Tibial artery (tissue), 4 donors: ENCODE measurements at regions of chr6 and their contacts with region 1.

Region 1: DNA sequence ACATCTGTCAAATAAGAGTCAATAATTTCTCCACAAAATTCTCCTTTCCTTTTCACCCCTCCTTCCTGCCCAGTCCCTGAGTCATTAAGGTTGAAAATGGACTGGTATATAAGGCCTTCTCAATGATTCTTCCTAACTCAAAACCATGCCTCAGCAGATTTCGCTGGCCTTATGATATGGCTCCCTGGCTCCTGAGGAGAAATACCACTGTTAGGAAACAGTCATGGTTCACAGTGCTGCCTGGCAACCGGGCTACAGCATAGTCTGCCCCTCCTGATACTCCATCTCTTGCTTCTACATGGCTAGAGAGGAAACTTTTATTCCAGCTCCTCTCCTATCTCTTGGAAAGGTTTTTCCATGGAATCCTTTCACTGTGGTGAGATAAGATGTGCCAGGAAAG is 4.7 kb downstream of the UBE2J1 start:
- DNase-seq: no peak
- H3K4me3 ChIP-seq: no peak overlapping the region
- H3K27ac ChIP-seq: no peak overlapping the region
- H3K4me1 ChIP-seq: peaks cover 0 to 66% (median 35%) of the 10 kb centered on the region in 4 donors
- H3K27me3 ChIP-seq: no peaks in the 10 kb centered on the region
- CTCF ChIP-seq: no peak

Region 2: DNA sequence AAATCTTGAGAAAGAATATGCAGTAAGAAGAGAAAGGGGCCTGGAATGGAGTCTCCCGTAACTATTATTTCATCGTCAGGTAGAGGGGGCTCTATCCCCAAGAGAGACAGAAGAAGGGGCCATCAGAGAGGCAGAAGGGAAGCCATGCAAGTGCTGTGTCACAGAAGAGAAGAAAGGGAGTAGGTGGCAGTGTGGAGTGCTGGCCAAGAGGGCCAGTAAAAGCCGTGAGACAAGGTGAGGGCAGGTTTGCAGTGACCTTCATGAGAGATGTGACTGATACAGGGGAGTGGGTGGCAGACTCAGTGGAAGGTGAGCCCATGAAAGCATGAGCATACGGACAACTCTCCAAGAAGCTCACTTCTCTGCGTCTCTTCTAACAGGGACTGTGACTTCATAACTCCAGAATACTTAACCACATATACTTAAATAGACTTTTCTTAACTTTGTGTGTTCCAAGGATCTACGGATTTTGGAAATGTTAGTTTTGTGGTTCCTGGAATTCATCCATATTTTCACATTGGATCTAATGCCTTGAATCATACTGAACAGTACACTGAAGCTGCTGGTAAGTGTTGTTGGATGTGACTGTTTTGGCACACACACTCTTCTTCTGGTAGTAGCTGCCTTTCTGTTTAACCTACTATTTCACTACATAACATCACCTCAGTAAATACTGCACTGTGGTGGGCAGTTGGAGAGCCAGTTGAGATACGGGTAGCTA is 186.3 kb before region 1 on chr6:
- intact Hi-C with region 1: no loop called
- DNase-seq: no peak
- H3K4me3 ChIP-seq: peak overlapping the region; percentile 12 to 27
- H3K27ac ChIP-seq: peak overlapping the region; percentile 82 to 89
- H3K4me1 ChIP-seq: peaks cover 0 to 41% (median 23%) of the 10 kb centered on the region in 4 donors
- H3K27me3 ChIP-seq: no peaks in the 10 kb centered on the region
- CTCF ChIP-seq: no peak

Region 3: DNA sequence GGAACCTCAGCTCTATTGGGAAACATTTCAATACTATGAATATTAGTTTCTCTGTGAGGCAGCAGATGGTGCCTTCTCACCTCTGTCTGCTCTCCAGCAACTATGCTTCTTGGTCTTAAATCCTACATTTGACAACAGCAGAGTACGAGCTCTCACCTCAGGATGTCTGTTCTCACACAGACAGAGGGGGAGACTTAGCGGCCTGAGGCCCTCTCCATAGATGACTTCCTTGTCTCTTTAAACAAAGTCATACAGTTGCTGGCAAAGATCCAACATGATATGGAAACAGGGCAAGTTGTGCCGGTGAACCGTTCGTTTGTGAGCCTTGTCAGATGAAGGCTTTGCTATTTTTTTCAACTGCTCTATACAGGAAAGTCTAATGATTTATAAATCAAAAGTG is 87.0 kb before region 1 on chr6:
- intact Hi-C with region 1: no loop called
- DNase-seq: no peak
- H3K4me3 ChIP-seq: no peak overlapping the region
- H3K27ac ChIP-seq: no peak overlapping the region
- H3K4me1 ChIP-seq: no peaks in the 10 kb centered on the region
- H3K27me3 ChIP-seq: no peaks in the 10 kb centered on the region
- CTCF ChIP-seq: no peak

Region 4: GRCh38 chr6:89416796-89417195 is 69.0 kb after region 1 on chr6:
- intact Hi-C with region 1: no loop called
- DNase-seq: no peak
- H3K4me3 ChIP-seq: no peak overlapping the region
- H3K27ac ChIP-seq: no peak overlapping the region
- H3K4me1 ChIP-seq: peaks cover 0 to 11% (median 5%) of the 10 kb centered on the region in 4 donors
- H3K27me3 ChIP-seq: no peaks in the 10 kb centered on the region
- CTCF ChIP-seq: no peak

Region 5: DNA sequence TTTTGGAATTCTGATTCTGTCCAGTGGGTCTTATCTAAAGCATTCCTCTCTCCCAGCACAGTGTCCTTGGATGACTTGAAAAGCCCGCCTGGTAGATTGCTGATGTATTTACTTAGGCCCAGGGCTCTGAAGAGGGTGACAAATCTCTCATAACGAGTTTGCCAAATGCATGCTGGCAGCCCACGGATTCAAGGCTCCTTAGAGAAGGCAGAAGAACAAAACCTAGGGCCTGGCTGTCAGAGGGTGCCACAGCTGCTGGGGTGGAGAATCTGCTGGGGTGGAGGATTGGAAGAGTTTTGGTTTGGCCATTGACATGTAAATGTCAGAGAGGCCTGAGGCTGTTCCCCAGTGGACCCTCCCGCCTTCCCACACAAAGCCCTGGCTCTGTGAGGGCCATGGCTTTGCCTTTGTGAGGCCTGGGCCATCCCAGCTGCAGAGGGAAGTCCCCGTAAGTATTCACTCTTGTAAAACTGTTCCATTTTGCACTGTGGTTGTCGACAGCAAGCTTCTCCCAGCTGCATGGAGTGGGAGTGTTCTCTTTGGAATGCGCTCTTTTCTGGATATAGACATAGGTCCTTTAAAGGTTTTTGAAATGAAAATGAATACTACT is 135.4 kb after region 1 on chr6:
- intact Hi-C with region 1: no loop called
- DNase-seq: peak; percentile 28 to 66
- H3K4me3 ChIP-seq: no peak overlapping the region
- H3K27ac ChIP-seq: peak overlapping the region; percentile 70 to 73
- H3K4me1 ChIP-seq: peaks cover 0 to 77% (median 41%) of the 10 kb centered on the region in 4 donors
- H3K27me3 ChIP-seq: no peaks in the 10 kb centered on the region
- CTCF ChIP-seq: no peak

Region 6: DNA sequence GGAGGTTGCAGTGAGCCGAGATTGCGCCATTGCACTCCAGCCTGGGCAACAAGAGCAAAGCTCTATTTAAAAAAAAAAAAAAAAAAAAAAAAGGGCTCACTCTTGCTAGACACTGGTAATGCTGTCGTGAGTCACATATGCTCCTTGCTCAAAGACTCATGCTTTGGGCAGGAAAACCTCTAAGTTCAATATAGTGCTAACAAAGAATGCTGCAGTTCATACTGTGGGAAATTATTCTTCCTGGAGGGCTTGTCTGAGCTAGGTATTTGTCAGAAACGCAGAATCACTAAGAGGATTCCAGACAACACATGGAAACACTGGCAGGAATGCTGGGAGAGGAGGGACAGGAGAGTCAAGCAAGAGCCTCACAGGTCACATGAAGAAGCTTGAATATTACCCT is 293.0 kb after region 1 on chr6:
- intact Hi-C with region 1: loop called (anchors 10 kb)
- DNase-seq: no peak
- H3K4me3 ChIP-seq: no peak overlapping the region
- H3K27ac ChIP-seq: no peak overlapping the region
- H3K4me1 ChIP-seq: peaks cover 0 to 25% (median 8%) of the 10 kb centered on the region in 4 donors
- H3K27me3 ChIP-seq: no peaks in the 10 kb centered on the region
- CTCF ChIP-seq: no peak